ENCODE measurements at regions of chr15 and their contacts with region 1.

Region 1: GRCh38 chr15:78979456-78980320 is 34.8 kb upstream of the CTSH start:
- DNase-seq: peak; percentile 65
- CTCF ChIP-seq: peak; percentile 72

Region 2: GRCh38 chr15:78909791-78910228 is 69.9 kb before region 1 on chr15:
- in situ Hi-C with region 1: loop called (anchors 10 kb)
- DNase-seq: peak; percentile 52
- CTCF ChIP-seq: peak; percentile 68

Region 3: GRCh38 chr15:79640206-79640605 is 660.5 kb after region 1 on chr15:
- in situ Hi-C with region 1: no loop called
- DNase-seq: no peak
- CTCF ChIP-seq: no peak